ENCODE measurements at regions of chr17 and their contacts with region 1.

Region 1: DNA sequence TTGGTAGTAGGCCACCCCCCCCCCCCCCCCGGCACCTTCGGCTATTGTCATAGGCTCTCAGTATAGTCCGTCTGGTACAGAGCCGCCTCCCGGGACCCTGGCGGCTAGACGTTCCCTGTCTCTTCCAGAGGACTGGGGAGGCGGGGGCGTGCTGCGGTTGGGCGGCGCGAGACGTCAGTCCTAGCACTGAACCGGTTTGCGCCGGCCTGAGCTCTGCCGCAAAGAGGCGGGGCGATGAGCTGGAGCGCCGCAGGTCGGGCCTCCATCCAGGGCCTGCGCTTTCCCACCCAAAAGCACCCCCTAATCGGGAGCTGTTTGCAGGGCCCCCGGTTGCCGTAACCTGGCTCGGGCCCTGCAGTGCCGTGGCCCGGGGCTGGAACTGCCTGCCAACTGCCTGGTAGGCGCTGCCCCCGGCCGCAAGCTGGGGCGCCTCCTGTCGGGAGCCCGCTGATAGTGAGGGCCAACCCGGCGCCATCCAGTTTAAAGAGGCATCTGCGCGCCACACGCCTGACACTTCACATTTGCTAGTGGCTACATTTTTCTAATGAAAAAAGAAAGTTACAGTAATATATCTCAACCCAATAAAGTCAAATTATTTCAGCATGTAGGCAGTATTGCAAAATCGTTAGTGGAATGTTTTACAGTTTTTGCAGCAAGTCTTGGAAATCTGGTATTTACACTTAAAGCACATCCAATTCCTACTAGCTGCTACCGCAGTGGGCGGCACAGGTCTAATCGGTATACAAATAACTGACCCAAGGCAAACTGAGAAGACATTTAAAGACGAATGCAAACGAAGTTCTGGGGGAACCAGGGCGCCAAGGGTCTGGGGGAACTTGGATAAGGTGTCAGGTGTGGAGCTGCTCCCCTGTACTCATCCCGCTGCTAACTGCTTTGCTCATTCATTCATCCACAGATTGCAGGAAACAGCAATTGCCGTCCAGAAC is 748 bp upstream of the USP22 start:
- DNase-seq: peak; percentile 98
- ATAC-seq: peak; percentile 88
- H3K4me3 Mint-ChIP-seq: peak overlapping the region; percentile 73
- H3K27ac Mint-ChIP-seq: peak overlapping the region; percentile 97
- H3K4me1 Mint-ChIP-seq: peaks cover 26% of the 10 kb centered on the region
- H3K27me3 Mint-ChIP-seq: peaks cover 3% of the 10 kb centered on the region
- CTCF ChIP-seq: peak; percentile 35; the same call in 1 of the 2 replicates

Region 2: DNA sequence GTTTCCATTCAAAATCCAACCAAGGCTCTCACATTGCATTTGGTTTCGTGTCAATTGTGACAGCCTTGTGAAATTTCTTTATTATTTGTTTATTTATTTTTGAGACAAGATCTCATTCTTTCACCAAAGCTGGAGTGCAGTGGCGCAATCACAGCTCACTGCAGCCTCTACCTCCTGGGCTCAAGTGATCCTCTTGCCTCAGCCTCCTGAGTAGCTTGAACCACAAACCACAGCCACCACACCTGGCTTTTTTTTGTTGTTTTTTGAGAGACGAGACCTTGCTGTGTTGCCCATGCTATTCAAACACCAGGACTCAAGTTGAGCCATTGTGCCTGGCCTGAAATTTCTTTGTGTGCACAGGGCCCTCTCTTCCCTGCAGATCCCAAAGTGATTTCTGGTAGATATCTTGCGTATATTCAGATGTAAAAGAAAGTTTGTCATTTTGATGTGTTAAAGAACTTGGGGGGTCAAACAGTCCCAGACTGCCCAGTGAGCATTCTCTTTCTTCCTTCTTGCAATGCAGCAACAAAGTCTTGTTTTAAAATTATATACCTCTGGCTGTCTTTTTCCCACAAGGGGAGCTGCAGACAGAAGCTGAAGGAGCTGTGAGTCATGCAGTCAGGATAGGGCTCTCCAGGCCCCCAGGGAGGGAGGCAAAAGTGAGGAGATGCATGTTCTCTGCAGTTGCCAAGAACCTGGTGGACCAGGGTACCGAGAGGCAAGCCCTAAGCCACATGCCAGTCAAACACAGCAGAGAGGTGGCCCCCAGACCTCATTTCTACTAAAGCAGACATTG is 14.7 kb after region 1 on chr17:
- CTCF ChIA-PET with region 1: interaction called, 36 read pairs
- POLR2A ChIA-PET with region 1: interaction called, 19 read pairs
- DNase-seq: no peak
- ATAC-seq: peak; percentile 44
- H3K4me3 Mint-ChIP-seq: no peak overlapping the region
- H3K27ac Mint-ChIP-seq: no peak overlapping the region
- H3K4me1 Mint-ChIP-seq: peaks cover 9% of the 10 kb centered on the region; the same call in 1 of the 2 replicates
- H3K27me3 Mint-ChIP-seq: no peaks in the 10 kb centered on the region
- CTCF ChIP-seq: no peak

Region 3: DNA sequence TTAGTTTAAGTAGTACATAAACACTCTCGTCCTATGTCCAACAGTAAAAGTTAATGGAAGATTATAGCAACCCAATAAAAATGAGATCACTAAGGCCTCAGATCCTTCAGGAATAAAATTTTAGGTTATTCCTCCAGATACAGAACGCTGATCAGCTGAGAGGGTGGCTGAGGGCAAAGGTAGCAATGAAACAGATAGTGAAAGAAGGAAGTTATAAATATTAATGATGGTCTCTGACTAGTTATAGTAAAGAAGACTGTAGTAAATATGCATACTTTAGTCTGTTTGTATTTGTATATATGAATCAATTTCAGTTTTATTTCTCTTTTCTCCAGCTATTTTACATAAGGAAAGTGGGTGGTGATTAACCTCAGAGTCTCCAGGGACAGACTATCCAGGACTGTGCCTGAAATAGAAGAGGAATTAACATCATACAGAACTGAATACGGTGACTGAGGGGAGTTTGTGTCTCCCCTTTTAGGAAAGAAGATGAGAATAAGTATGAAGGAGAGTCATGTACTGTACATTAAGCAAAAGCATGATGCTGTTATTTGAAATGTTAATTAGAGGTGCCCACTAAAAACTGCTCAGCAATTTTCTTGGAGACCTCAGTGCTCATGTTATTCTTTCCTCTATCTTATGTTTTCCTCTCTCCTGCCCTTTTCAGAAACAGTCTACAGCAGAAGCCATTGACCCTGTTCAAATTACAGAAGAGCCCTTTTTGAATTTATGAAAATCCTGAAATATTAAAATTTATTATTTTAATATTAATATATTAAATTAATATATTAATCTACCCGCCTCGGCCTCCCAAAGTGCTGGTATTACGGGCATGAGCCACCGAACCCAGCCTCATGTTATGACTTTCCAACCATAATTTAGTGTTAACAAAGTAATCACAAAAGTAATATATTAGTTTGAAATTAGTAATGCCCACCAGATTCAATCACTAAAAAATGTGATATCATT is 46.7 kb after region 1 on chr17:
- CTCF ChIA-PET with region 1: interaction called, 10 read pairs
- POLR2A ChIA-PET with region 1: no interaction called
- DNase-seq: no peak
- ATAC-seq: no peak
- H3K4me3 Mint-ChIP-seq: no peak overlapping the region
- H3K27ac Mint-ChIP-seq: no peak overlapping the region
- H3K4me1 Mint-ChIP-seq: peaks cover 5% of the 10 kb centered on the region
- H3K27me3 Mint-ChIP-seq: no peaks in the 10 kb centered on the region; the same call in 1 of the 2 replicates
- CTCF ChIP-seq: no peak

Region 4: DNA sequence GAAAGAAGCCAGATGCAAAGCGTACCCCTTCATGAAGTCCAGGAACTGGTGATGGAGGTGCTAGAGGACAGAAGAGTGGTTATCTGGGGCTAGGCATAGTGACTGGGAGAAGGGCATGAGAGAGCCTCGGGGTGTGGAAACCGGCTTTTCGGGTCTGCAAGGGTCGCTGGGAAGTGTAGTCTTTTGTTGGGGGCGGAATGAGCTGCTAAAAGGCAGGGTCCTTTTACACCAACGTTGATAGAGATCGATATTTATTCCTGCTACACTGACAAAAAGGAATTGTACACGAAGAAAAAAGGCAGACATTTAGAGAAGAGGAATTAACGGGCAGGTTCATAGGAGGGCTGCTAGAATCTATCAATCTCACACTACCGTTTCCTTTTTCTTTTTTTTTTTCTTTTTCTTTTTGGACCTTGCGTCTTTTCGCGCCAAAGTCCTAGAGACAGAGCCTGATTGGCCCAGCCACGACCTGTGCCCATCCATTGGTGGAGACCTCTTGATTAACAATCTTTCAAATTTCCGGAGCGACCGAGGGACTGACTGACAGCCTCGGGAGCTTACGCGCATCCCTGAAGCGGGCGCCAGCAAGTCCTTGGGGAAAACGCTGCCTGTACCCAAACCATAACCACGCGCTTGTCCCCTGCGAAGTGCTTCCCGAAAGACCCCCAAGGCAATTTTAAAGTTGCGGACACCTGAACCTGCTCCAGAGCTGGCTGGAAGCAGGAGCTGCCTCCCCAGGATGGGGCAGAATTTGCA is 55.6 kb after region 1 on chr17:
- CTCF ChIA-PET with region 1: interaction called, 33 read pairs
- POLR2A ChIA-PET with region 1: interaction called, 36 read pairs
- DNase-seq: peak; percentile 81
- ATAC-seq: peak; percentile 95
- H3K4me3 Mint-ChIP-seq: peak overlapping the region; percentile 97
- H3K27ac Mint-ChIP-seq: peak overlapping the region; percentile 99
- H3K4me1 Mint-ChIP-seq: no peaks in the 10 kb centered on the region
- H3K27me3 Mint-ChIP-seq: no peaks in the 10 kb centered on the region
- CTCF ChIP-seq: no peak

Region 5: GRCh38 chr17:21108651-21109050 is 65.1 kb after region 1 on chr17:
- CTCF ChIA-PET with region 1: interaction called, 12 read pairs
- POLR2A ChIA-PET with region 1: interaction called, 6 read pairs
- DNase-seq: no peak
- ATAC-seq: no peak
- H3K4me3 Mint-ChIP-seq: no peak overlapping the region
- H3K27ac Mint-ChIP-seq: peak overlapping the region; percentile 45
- H3K4me1 Mint-ChIP-seq: peaks cover 59% of the 10 kb centered on the region
- H3K27me3 Mint-ChIP-seq: no peaks in the 10 kb centered on the region
- CTCF ChIP-seq: no peak

Region 6: GRCh38 chr17:21119247-21119918 is 75.8 kb after region 1 on chr17:
- CTCF ChIA-PET with region 1: interaction called, 16 read pairs
- POLR2A ChIA-PET with region 1: interaction called, 5 read pairs
- DNase-seq: peak; percentile 70
- ATAC-seq: peak; percentile 86
- H3K4me3 Mint-ChIP-seq: 0 out of 2 replicates have a peak overlapping the region, but pooled peaks have one; percentile 17
- H3K27ac Mint-ChIP-seq: peak overlapping the region; percentile 24; the same call in 1 of the 2 replicates
- H3K4me1 Mint-ChIP-seq: peaks cover 18% of the 10 kb centered on the region
- H3K27me3 Mint-ChIP-seq: peaks cover 3% of the 10 kb centered on the region; the same call in 1 of the 2 replicates
- CTCF ChIP-seq: peak; percentile 65

Region 7: GRCh38 chr17:21129023-21129681 is 85.6 kb after region 1 on chr17:
- CTCF ChIA-PET with region 1: interaction called, 10 read pairs
- POLR2A ChIA-PET with region 1: interaction called, 6 read pairs
- DNase-seq: no peak
- ATAC-seq: no peak
- H3K4me3 Mint-ChIP-seq: peak overlapping the region; percentile 45
- H3K27ac Mint-ChIP-seq: peak overlapping the region; percentile 75
- H3K4me1 Mint-ChIP-seq: peaks cover 35% of the 10 kb centered on the region
- H3K27me3 Mint-ChIP-seq: peaks cover 4% of the 10 kb centered on the region; the same call in 1 of the 2 replicates
- CTCF ChIP-seq: no peak